ENCODE measurements at regions of chr4 and their contacts with region 1.

Region 1: DNA sequence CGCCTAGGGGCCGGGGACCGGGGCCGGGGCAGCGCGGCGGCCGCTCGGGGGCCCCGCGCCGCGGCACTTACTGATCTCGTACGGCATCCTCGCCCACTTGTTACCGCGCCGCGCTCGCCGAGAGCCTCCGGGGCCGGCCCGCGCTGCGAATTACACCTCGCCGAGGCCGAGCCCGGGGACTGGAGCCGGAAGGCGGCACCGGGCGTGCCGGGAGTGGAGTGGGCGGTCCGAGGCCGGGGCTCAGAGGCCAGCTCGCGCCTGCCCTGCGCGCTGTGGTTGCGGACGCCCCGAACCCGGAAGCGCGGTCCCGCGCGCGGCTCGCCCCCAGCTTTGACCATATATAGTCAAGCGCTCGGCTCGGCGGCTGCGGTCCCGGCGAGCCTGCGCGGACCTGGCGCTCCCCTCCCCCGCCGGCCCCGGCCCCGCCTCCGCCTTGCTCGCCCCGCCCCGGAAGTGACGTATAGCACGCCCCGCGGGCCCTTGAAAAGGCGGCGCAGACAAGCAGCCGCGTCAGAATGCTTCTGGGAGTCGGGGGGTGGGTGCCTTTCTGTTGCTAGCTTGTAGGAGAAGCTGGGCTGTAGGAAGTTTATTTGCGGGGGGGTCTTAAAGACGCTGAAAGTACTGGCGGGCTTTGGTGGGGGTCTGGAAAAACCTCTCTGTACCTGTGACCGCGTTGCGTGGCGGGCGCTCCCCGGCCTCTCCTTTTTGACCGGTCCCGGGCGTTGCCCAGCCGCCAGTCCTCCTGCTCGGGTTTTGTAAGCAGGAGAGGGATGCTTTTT is at the start of gene WDR1:
- DNase-seq: peak; percentile 93
- ATAC-seq: peak; percentile 83
- H3K4me3 Mint-ChIP-seq: peak within 1 kb of the TSS; percentile 96
- H3K27ac Mint-ChIP-seq: peak within 1 kb of the TSS; percentile 99
- H3K4me1 Mint-ChIP-seq: peaks cover 67% of the 10 kb centered on the region
- H3K27me3 Mint-ChIP-seq: no peaks in the 10 kb centered on the region
- total RNA-seq, gene WDR1: 516 to 550 TPM

Region 2: GRCh38 chr4:10096201-10096977 is 20.4 kb before region 1 on chr4:
- CTCF ChIA-PET with region 1: interaction called, 16 read pairs
- POLR2A ChIA-PET with region 1: interaction called, 48 read pairs
- DNase-seq: peak; percentile 89
- ATAC-seq: peak; percentile 74
- H3K4me3 Mint-ChIP-seq: peak overlapping the region; percentile 58
- H3K27ac Mint-ChIP-seq: peak overlapping the region; percentile 91
- H3K4me1 Mint-ChIP-seq: peaks cover 97% of the 10 kb centered on the region
- H3K27me3 Mint-ChIP-seq: no peaks in the 10 kb centered on the region

Region 3: GRCh38 chr4:10129196-10130177 is 12.7 kb after region 1 on chr4:
- CTCF ChIA-PET with region 1: interaction called, 12 read pairs
- POLR2A ChIA-PET with region 1: interaction called, 14 read pairs
- DNase-seq: no peak
- ATAC-seq: no peak
- H3K4me3 Mint-ChIP-seq: no peak overlapping the region
- H3K27ac Mint-ChIP-seq: no peak overlapping the region
- H3K4me1 Mint-ChIP-seq: peaks cover 3% of the 10 kb centered on the region
- H3K27me3 Mint-ChIP-seq: no peaks in the 10 kb centered on the region

Region 4: DNA sequence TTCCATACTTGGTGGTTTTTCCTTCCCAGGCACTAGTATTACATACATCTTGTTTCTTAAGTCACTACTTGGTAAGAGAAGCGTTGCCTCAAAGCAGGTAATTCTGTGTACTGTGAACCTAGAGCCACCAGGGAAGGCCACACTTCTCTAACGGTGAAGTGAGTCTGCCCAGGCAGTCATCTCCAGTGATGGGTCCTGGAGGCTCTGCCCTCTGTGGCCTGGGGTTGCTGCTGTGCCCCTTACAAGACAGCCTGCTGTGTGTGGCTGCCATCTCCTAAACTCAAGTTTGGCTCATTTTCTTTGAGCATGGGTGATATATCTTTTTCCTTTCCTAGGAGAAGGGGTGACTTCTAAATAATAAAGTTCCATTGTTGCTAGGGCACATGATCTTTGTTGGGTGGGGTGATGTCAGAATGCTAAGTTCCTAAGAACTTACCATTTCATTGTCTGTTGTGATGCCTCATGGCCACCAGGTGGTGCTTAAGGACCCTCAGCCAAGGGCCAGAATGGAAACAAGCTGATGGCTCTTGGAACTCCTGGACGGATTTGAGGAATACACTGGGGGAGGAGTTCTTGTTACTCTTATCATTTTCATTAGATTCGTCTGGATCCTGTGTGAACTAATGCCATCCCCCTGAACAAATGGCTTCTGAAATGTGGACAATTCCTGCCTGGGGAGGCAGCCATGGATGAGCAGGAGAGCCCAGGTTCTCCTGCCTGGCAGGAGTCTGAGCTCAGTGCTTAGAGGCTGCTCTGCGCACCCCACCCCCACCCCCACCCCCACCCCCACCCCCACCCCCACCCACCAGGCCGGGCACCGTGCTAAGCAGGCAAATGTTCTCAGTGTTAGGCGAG is 40.9 kb after region 1 on chr4:
- CTCF ChIA-PET with region 1: interaction called, 52 read pairs
- POLR2A ChIA-PET with region 1: interaction called, 17 read pairs
- DNase-seq: peak; percentile 59
- ATAC-seq: peak; percentile 40
- H3K4me3 Mint-ChIP-seq: no peak overlapping the region
- H3K27ac Mint-ChIP-seq: no peak overlapping the region
- H3K4me1 Mint-ChIP-seq: peaks cover 38% of the 10 kb centered on the region
- H3K27me3 Mint-ChIP-seq: peaks cover 7% of the 10 kb centered on the region

Region 5: GRCh38 chr4:10180927-10181782 is 64.4 kb after region 1 on chr4:
- CTCF ChIA-PET with region 1: interaction called, 10 read pairs
- POLR2A ChIA-PET with region 1: interaction called, 9 read pairs
- DNase-seq: peak; percentile 66
- ATAC-seq: peak; percentile 83
- H3K4me3 Mint-ChIP-seq: peak overlapping the region; percentile 6
- H3K27ac Mint-ChIP-seq: peak overlapping the region; percentile 93
- H3K4me1 Mint-ChIP-seq: peaks cover 51% of the 10 kb centered on the region
- H3K27me3 Mint-ChIP-seq: no peaks in the 10 kb centered on the region

Region 6: DNA sequence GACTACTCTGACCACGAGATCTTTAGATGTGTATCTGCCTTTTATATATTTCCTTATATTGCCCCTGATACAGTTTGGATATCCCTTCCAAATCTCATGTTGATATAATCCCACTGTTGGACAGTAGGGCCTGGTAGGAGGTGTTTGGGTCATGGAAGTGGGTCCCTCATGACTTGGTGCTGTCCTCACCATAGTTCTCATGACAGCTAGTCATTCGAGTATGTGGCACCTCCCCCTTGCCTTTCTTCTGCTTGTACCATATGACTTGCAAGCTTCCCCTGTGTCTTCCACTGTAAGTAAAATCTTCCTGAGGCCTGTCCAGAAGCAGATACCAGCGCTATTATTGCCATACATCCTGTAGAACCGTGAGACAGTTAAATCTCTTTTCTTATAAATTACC is 195.2 kb after region 1 on chr4:
- CTCF ChIA-PET with region 1: no interaction called
- POLR2A ChIA-PET with region 1: no interaction called
- DNase-seq: no peak
- ATAC-seq: no peak
- H3K4me3 Mint-ChIP-seq: no peak overlapping the region
- H3K27ac Mint-ChIP-seq: no peak overlapping the region
- H3K4me1 Mint-ChIP-seq: no peaks in the 10 kb centered on the region
- H3K27me3 Mint-ChIP-seq: peaks cover 2% of the 10 kb centered on the region

Measured in activated CD8-positive, alpha-beta T cell treated with anti-CD3 and anti-CD28 coated beads, Interleukin-2, amount 10 ng/mL, durations not matched to agents 7 days and 5 days (primary cell).